PC-9 (cell line): ENCODE measurements at regions of chr10 and their contacts with region 1.

Region 1: GRCh38 chr10:80205478-80206276 is at the start of gene ANXA11:
- DNase-seq: peak; percentile 87 to 88
- H3K4me3 ChIP-seq: peak within 1 kb of the TSS; percentile 92
- H3K27ac ChIP-seq: peak within 1 kb of the TSS; percentile 98
- H3K4me1 ChIP-seq: peaks cover 62% of the 10 kb centered on the region
- H3K27me3 ChIP-seq: no peaks in the 10 kb centered on the region
- CTCF ChIP-seq: no peak
- total RNA-seq, gene ANXA11: 287 and 318 TPM in 2 replicates

Region 2: DNA sequence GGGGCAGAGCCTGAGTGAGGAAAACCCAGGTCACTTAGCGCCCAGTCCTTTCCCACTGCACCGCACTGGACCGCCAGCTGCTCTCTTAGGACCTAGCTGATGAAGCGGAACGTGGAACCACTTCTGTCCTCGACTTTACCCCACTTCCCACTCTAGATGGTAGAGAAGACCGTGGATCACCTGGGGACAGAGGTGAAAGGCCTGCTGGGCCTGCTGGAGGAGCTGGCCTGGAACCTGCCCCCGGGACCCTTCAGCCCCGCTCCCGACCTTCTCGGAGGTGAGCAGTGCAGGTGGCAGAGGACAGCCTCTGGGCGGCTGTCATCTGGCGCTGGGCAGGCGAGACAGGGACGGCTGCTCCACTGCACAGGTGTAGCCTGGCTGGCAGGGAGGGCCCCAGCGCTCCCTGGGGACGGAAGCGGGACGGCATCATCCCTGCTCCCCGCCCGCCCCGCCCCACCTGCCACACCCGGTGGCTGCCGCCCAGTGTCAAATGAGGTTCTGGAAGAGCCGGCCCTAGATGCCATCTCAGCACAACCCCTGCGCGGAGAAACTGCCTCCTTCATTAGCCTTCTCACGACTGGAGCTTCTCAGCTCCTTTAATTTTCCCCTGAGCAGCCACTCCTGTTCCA is 61.5 kb before region 1 on chr10:
- CTCF ChIA-PET with region 1: interaction called, 7 read pairs
- POLR2A ChIA-PET with region 1: interaction called, 5 read pairs
- intact Hi-C with region 1: loop called (anchors 1 kb)
- DNase-seq: peak; percentile 58 to 77
- H3K4me3 ChIP-seq: peak overlapping the region; percentile 48
- H3K27ac ChIP-seq: no peak overlapping the region
- H3K4me1 ChIP-seq: peaks cover 23% of the 10 kb centered on the region
- H3K27me3 ChIP-seq: no peaks in the 10 kb centered on the region
- CTCF ChIP-seq: no peak; the same call in 1 of the 2 replicates

Region 3: DNA sequence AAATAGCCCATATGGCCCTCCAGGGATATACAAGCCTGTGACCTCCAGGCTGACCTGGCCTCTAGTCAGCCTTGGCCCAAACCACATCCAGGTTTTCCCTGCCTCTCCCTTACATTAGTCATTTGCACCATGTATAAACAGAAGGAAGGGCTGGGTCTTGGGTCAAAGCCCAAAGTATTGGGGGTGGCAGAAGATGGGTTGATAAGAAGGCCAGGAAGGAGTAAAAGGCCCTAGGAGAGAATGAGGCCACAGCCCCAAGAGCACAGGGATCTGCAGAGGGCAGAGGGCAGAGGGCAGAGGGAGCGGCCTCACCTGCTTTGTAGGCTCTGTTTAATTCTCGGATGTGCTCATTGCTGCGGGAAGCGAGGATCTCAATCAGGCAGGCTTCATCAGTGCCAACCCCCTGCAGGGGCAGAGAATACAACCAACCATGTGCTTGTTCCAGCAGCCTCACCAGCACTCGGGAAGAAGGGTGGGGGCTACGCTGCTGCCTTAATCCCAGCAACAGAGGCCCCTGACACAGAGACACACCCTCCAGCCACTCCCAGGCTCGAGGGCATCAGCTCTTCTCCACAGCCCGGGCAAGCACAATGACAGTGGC is 41.8 kb before region 1 on chr10:
- CTCF ChIA-PET with region 1: interaction called, 6 read pairs
- POLR2A ChIA-PET with region 1: interaction called, 11 read pairs
- intact Hi-C with region 1: loop called (anchors 1 kb)
- DNase-seq: peak; percentile 79 to 96
- H3K4me3 ChIP-seq: no peak overlapping the region
- H3K27ac ChIP-seq: peak overlapping the region; percentile 62
- H3K4me1 ChIP-seq: peaks cover 72% of the 10 kb centered on the region
- H3K27me3 ChIP-seq: no peaks in the 10 kb centered on the region
- CTCF ChIP-seq: no peak

Region 4: GRCh38 chr10:80459047-80459931 is 253.6 kb after region 1 on chr10:
- CTCF ChIA-PET with region 1: no interaction called
- POLR2A ChIA-PET with region 1: interaction called, 7 read pairs
- intact Hi-C with region 1: loop called (anchors 10 kb)
- DNase-seq: peak; percentile 86 to 93
- H3K4me3 ChIP-seq: peak overlapping the region; percentile 51
- H3K27ac ChIP-seq: peak overlapping the region; percentile 82
- H3K4me1 ChIP-seq: peaks cover 85% of the 10 kb centered on the region
- H3K27me3 ChIP-seq: no peaks in the 10 kb centered on the region
- CTCF ChIP-seq: no peak; the same call in 1 of the 2 replicates